ENCODE measurements at regions of chr5 and their contacts with region 1.

Region 1: GRCh38 chr5:176543428-176544173 is 5.5 kb upstream of the CDHR2 start:
- DNase-seq: peak; percentile 81 to 82
- H3K4me3 ChIP-seq: peak overlapping the region; percentile 71
- H3K4me3 Mint-ChIP-seq: peak overlapping the region; percentile 85
- H3K27ac Mint-ChIP-seq: peak overlapping the region; percentile 86
- H3K4me1 ChIP-seq: peaks cover 33% of the 10 kb centered on the region
- H3K4me1 Mint-ChIP-seq: peaks cover 29% of the 10 kb centered on the region
- H3K27me3 ChIP-seq: no peaks in the 10 kb centered on the region
- H3K27me3 Mint-ChIP-seq: no peaks in the 10 kb centered on the region
- CTCF ChIP-seq: no peak

Region 2: DNA sequence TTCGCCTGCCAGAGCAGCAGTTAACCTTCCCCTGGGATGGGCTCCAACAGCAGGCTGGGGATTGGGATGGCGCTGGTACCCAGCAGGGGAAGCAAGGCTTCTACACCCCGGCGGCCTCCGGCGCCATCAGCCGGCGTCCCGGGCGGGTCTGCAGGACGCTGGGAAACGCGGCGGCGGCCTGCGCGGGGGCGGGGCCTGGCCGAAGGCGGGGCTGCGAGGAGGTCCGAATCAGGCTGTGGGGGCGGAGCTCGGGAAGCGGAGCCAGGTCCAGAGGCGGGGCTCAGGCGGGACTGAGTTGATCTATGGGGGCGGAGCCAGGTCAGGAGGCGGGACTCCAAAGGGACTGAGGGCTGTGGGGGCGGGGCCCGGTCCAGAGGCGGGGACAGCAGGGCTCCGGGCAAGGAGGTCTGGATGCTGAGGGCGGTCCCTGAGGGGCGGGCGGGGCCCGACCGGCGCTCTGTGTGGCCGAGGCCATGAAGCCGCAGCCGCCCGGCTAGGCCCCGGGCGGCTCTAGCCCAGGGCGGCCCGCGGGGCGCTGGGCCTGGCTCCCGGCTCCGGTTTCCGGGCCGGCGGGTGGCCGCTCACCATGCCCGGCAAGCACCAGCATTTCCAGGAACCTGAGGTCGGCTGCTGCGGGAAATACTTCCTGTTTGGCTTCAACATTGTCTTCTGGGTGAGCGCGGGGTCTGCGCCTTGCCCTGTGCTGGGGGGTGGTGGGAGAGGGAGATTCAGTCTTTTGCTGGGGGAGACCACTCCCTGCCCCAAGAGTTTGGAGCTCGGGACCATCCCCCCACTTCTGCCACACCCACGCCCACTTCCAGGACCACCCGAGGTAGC is 103.6 kb after region 1 on chr5 and contains the start of gene TSPAN17:
- CTCF ChIA-PET with region 1: interaction called, 8 read pairs
- POLR2A ChIA-PET with region 1: interaction called, 13 read pairs
- intact Hi-C with region 1: no loop called
- DNase-seq: peak; percentile 100
- H3K4me3 ChIP-seq: peak within 1 kb of the TSS; percentile 72
- H3K4me3 Mint-ChIP-seq: peak within 1 kb of the TSS; percentile 71
- H3K27ac Mint-ChIP-seq: peak within 1 kb of the TSS; percentile 63
- H3K4me1 ChIP-seq: peaks cover 10% of the 10 kb centered on the region
- H3K4me1 Mint-ChIP-seq: no peaks in the 10 kb centered on the region
- H3K27me3 ChIP-seq: no peaks in the 10 kb centered on the region
- H3K27me3 Mint-ChIP-seq: no peaks in the 10 kb centered on the region
- CTCF ChIP-seq: no peak
- total RNA-seq, gene TSPAN17: 19.6 and 20.5 TPM in 2 replicates

Region 3: DNA sequence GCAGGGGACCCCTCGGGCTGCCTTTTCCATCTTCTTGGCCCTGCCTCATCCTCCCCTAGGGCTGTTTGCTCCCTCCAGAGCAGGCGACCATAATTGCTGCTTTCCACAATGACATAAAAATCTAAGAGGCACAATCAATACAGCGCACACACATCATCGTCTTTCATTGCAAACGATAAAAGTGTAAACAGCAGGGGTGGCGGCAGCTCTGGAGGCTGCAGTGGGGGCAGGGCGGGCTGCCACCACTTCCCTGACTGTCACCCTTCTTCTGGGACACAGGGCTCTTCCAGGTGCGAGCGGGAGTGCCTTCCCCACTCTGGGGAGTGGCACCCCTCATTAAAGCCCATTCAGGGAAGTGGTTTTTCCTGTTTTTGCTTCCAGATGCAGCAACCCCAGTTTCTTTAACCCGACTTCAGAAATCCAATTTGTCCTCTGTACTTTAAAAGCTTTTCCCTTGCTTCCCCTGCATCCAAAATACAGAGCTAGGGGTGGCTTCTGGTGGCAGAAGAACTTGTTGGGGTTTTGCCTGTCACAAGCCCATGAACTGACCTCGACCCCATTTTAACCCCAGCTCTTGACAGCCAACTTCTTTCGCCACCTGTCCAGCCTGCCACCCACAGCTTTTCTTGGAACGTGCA is 149.4 kb after region 1 on chr5:
- CTCF ChIA-PET with region 1: no interaction called
- POLR2A ChIA-PET with region 1: interaction called, 10 read pairs
- intact Hi-C with region 1: no loop called
- DNase-seq: no peak
- H3K4me3 ChIP-seq: no peak overlapping the region
- H3K4me3 Mint-ChIP-seq: peak overlapping the region; percentile 34
- H3K27ac Mint-ChIP-seq: no peak overlapping the region
- H3K4me1 ChIP-seq: 0 out of 2 replicates have a peak, but pooled peaks cover 7% of the 10 kb centered on the region
- H3K4me1 Mint-ChIP-seq: peaks cover 17% of the 10 kb centered on the region
- H3K27me3 ChIP-seq: no peaks in the 10 kb centered on the region
- H3K27me3 Mint-ChIP-seq: peaks cover 14% of the 10 kb centered on the region
- CTCF ChIP-seq: no peak

Measured in Caco-2 (cell line).